ENCODE measurements at regions of chr14 and their contacts with region 1.

Region 1: DNA sequence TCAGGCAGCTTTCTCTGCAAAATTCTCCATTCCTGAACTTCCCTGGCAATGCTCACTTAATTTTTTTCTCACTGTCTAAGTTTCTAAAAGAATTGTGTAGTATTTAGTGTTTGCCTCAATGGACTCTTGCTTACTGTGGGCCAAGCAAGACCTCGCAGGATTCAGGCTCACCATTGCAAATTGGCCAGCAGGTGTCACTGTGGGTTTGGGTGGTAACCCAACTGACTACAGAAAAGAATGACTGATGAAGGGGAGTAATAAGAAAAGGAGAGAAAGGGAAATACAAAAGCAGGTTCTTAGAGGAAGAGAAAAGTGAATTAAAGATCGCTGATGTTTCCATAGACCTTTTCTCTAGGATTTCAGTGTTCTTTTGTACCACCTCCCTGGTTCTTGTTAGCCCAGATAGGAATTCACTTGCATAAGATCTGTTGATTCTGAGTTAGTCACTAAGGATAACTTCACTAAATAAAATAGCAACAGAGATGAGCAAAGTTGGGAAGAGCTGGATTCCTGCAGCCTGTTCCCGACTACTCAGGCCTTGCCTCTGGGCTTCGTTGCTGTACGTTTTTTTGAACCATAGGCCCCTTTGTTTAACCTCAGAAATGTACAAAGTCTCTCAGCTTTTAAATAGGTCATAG is 386.5 kb upstream of the DDHD1 start:
- DNase-seq: peak; percentile 83
- ATAC-seq: peak; percentile 77
- H3K4me3 ChIP-seq: no peak overlapping the region
- H3K27ac ChIP-seq: peak overlapping the region; percentile 64; the same call in 1 of the 2 replicates
- H3K4me1 ChIP-seq: peaks cover 20% of the 10 kb centered on the region
- H3K27me3 ChIP-seq: no peaks in the 10 kb centered on the region
- CTCF ChIP-seq: peak; percentile 90
- POLR2A ChIP-seq: no peak
- RAD21 ChIP-seq: peak; percentile 89

Region 2: DNA sequence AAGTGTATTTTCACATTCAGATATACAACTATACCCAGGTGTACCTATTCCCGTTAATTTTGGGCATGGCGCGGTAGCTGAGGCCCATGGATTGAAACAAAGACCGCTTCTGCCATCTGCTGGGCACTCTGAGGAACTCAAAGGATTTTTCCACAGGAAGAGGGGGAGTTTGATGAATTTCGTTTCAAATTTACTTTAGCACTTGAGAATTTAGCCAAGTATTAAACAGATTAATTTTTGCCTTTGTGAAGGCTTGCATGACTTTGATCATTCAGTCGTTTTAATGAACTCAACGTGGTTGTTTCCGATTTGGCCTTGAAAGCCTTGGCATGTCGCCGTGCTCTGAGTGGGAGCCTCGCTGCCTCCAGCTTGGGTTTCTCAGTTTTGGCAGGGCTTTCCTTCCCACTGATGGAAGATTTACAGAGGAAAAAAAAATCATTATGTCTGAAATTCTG is 233.3 kb before region 1 on chr14:
- CTCF ChIA-PET with region 1: no interaction called
- POLR2A ChIA-PET with region 1: no interaction called
- dilution Hi-C with region 1: no loop called
- in situ Hi-C with region 1: no loop called
- intact Hi-C with region 1: loop called (anchors 5 kb)
- DNase-seq: peak; percentile 69
- ATAC-seq: peak; percentile 78
- H3K4me3 ChIP-seq: peak overlapping the region; percentile 56
- H3K27ac ChIP-seq: peak overlapping the region; percentile 38; the same call in 1 of the 2 replicates
- H3K4me1 ChIP-seq: peaks cover 10% of the 10 kb centered on the region
- H3K27me3 ChIP-seq: no peaks in the 10 kb centered on the region; the same call in 1 of the 2 replicates
- CTCF ChIP-seq: peak; percentile 80
- POLR2A ChIP-seq: no peak
- RAD21 ChIP-seq: peak; percentile 79

Region 3: DNA sequence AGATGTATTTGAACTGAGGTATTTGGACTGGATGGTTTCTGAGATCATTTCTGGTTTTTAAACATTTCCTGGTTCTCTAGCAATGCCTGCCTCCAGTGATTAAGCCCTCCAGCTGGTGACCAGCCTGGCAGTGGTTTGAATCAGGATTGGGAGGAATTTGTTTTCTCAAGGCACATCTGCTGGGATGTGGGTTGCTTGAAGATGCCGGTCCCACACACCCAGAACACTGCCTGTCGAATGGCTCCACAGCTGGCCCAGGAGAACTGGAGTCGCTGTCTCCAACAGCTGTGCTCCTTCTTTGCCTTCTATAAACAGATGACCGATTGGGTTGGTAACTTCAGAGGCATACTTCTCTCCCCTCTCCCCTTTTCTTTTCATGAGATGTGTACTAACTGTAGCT is 128.5 kb before region 1 on chr14:
- CTCF ChIA-PET with region 1: no interaction called
- POLR2A ChIA-PET with region 1: no interaction called
- dilution Hi-C with region 1: no loop called
- in situ Hi-C with region 1: no loop called
- intact Hi-C with region 1: loop called (anchors 1 kb)
- DNase-seq: peak; percentile 94
- ATAC-seq: peak; percentile 82
- H3K4me3 ChIP-seq: no peak overlapping the region
- H3K27ac ChIP-seq: peak overlapping the region; percentile 4; the same call in 1 of the 2 replicates
- H3K4me1 ChIP-seq: peaks cover 10% of the 10 kb centered on the region
- H3K27me3 ChIP-seq: no peaks in the 10 kb centered on the region
- CTCF ChIP-seq: no peak
- POLR2A ChIP-seq: no peak
- RAD21 ChIP-seq: no peak

Region 4: GRCh38 chr14:53619691-53620231 is 80.2 kb after region 1 on chr14:
- CTCF ChIA-PET with region 1: no interaction called
- POLR2A ChIA-PET with region 1: no interaction called
- dilution Hi-C with region 1: no loop called
- in situ Hi-C with region 1: no loop called
- intact Hi-C with region 1: loop called (anchors 5 kb)
- DNase-seq: peak; percentile 64
- ATAC-seq: peak; percentile 96
- H3K4me3 ChIP-seq: no peak overlapping the region
- H3K27ac ChIP-seq: peak overlapping the region; percentile 82; the same call in 1 of the 2 replicates
- H3K4me1 ChIP-seq: peaks cover 20% of the 10 kb centered on the region
- H3K27me3 ChIP-seq: peaks cover 2% of the 10 kb centered on the region; the same call in 1 of the 2 replicates
- CTCF ChIP-seq: no peak
- POLR2A ChIP-seq: no peak
- RAD21 ChIP-seq: no peak

Region 5: GRCh38 chr14:53894456-53894855 is 354.8 kb after region 1 on chr14:
- CTCF ChIA-PET with region 1: no interaction called
- POLR2A ChIA-PET with region 1: no interaction called
- dilution Hi-C with region 1: no loop called
- in situ Hi-C with region 1: no loop called
- intact Hi-C with region 1: loop called (anchors 5 kb)
- DNase-seq: peak; percentile 79
- ATAC-seq: peak; percentile 85
- H3K4me3 ChIP-seq: no peak overlapping the region
- H3K27ac ChIP-seq: peak overlapping the region; percentile 81
- H3K4me1 ChIP-seq: peaks cover 23% of the 10 kb centered on the region
- H3K27me3 ChIP-seq: no peaks in the 10 kb centered on the region
- CTCF ChIP-seq: no peak
- POLR2A ChIP-seq: no peak
- RAD21 ChIP-seq: no peak

Region 6: DNA sequence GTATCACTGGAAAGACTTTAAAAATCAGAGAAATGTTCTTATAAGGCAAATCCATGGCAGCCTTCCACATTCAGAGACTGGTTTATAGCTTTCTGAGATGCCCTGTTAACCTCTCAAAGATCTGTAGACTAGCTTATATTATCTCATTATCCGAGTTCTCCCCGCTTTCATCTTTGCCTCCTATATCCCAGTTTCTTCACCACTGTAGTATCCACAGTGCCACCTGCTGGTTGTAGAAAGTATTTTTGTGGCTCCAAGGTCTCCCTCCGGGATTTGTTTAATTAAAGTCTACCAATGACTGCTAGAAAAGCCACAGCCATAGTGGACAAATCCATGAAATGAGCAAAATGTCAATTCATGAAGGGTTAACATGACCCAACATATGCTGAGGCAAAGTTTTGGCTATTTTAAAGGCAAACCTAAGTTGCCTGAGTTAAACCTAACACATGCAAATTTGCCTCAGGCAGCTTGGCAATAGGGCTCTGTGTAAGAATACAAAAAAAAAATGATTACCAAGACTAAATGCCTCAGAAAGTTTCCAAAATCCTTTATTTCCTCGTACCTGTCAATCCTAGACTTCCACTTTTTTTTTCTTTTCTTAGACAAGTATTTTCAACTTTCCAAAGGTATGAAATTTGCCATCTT is 635.8 kb after region 1 on chr14:
- CTCF ChIA-PET with region 1: interaction called, 4 read pairs
- POLR2A ChIA-PET with region 1: no interaction called
- dilution Hi-C with region 1: no loop called
- in situ Hi-C with region 1: loop called (anchors 10 kb)
- intact Hi-C with region 1: loop called (anchors 1 kb)
- DNase-seq: peak; percentile 73
- ATAC-seq: peak; percentile 83
- H3K4me3 ChIP-seq: no peak overlapping the region
- H3K27ac ChIP-seq: no peak overlapping the region
- H3K4me1 ChIP-seq: peaks cover 9% of the 10 kb centered on the region; the same call in 1 of the 2 replicates
- H3K27me3 ChIP-seq: peaks cover 8% of the 10 kb centered on the region
- CTCF ChIP-seq: peak; percentile 84
- POLR2A ChIP-seq: no peak
- RAD21 ChIP-seq: peak; percentile 81

Region 7: DNA sequence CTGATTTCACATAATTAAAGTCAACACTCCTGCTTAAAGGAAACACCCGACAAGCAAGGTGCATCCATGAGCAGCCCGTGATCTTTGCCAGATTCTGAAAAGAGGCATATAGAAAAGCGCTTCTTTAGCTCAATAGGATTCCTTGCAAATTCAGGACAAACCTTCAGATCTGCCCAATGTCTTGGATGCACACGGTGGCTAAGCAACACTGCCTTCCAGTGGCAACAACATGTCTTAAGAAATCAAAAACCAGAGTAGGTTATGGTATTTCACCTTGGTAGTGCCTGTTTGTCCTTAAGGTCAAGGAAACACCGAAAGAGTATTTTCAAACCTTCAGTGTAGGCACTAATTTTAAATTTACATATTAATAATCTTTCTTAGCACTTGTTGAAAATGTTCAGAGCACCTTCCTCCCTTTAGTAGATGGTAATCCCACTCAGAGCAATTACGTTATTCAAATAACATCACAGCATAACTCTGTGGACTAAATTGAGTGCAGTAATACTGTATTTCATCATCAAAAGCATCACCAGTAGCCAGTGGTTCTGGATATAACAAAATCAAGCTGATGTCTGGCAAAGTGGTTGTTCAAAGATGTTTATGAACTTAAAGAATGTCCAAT is 799.2 kb after region 1 on chr14:
- CTCF ChIA-PET with region 1: no interaction called
- POLR2A ChIA-PET with region 1: no interaction called
- dilution Hi-C with region 1: no loop called
- in situ Hi-C with region 1: loop called (anchors 5 kb)
- intact Hi-C with region 1: loop called (anchors 2 kb)
- DNase-seq: peak; percentile 57
- ATAC-seq: peak; percentile 78
- H3K4me3 ChIP-seq: no peak overlapping the region
- H3K27ac ChIP-seq: no peak overlapping the region
- H3K4me1 ChIP-seq: no peaks in the 10 kb centered on the region; the same call in 1 of the 2 replicates
- H3K27me3 ChIP-seq: peaks cover 9% of the 10 kb centered on the region
- CTCF ChIP-seq: peak; percentile 63
- POLR2A ChIP-seq: no peak
- RAD21 ChIP-seq: peak; percentile 77